Left colon (tissue), 2 donors: ENCODE measurements at regions of chr6 and their contacts with region 1.

Region 1: GRCh38 chr6:44655412-44656342 is 268.2 kb downstream of the CDC5L start:
- DNase-seq: peak; percentile 57 to 75
- ATAC-seq: peak; percentile 65

Region 2: GRCh38 chr6:44489910-44490604 is 165.6 kb before region 1 on chr6:
- intact Hi-C with region 1: loop called in 1 of 2 experiments (anchors 10 kb)
- DNase-seq: no peak
- ATAC-seq: no peak

Region 3: DNA sequence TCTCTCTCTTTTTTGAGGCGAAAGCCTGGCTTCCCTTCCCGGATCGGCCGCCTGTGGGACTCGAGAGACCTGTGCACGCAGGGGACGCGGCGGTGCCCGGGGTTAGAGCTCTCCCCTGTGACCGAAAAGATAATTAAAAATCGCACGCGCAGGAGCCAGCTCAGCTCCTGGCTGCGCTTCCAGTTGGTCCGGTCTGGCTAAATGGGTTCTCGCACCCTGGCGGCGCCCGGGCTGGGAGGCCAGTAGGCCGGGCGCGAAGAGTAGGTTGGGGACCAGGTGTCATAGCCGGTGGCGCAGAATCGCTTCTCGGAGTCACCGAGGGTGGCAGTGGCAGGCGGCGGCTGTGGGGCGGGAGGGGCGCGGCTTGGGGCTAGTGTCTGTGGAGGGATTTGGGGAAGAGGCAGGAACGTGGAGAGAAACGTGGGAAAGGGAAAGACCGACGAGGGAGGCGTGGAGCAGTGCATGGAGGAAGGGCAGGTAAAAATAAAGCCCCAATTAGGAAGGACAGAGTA is 764.0 kb after region 1 on chr6:
- intact Hi-C with region 1: loop called in 1 of 2 experiments (anchors 10 kb)
- DNase-seq: peak; percentile 66 to 70
- ATAC-seq: peak; percentile 60

Region 4: DNA sequence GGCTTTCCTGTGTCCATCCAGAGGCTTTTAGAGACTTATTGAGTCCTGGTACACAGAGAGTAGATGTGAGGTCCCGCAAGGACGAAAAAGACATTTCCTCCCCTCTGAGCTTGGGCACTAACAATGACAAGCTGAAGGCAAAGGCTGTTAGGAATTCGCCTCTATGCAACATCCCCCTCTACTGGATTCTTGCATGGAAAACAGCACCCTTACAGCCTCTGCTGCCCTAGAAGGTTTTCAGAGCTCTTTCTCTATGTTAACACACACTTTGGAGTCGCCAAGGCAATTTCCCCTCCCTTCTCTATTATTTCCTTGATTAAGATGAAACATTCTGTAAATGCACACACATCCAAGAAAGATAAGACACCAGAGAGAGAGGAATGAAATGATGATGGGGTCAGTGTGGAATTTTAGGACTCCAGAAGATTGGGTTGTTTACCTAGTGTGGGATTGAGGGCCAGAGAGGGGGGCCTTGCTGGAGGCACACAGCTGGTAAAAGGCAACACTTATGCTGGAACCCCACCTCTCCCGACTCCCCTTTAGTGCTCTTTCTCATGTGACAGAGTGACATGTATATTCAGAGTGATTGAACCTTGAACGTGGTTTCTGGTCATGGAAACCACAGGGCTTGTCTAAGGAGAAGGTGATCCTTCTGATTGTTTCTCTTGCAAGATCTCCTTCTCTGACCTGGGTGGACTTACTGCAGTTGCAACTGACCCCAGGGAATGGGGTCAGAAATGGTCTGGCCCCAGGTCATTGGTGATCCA is 1059.2 kb after region 1 on chr6:
- intact Hi-C with region 1: loop called in 1 of 2 experiments (anchors 5 kb)
- DNase-seq: peak; percentile 22 to 44
- ATAC-seq: peak; percentile 96

Region 5: DNA sequence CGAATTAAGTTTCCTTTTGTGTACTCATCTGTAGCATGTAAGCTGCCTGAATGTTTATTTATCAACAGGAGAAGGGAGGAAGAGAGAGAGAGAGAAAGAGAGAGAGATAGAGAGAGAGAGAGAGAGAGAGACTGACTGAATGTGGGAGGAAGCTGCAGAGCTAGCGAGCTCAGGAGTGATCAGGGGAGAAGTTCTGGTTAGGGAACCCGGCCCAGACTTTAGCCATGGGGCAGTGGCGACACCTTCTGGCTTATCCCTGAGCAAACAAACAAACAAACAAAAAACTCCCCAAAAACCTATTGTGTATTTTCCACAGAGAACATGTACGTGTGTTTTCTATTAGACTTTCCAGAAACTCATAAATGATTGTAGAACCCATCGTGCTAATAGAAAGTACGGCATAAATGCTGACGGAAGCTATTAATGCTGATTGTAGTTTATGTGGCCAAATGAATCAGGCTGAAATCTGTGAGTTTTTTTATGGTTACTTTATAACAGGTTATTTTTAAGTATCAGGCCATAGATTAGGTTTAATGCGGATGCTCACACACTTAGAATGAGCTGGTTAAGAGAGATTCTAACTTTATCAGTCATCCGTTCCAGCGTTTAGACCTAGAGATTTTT is 1267.2 kb after region 1 on chr6:
- intact Hi-C with region 1: loop called in 1 of 2 experiments (anchors 10 kb)
- DNase-seq: peak; percentile 48 to 55
- ATAC-seq: peak; percentile 54